ENCODE measurements at regions of chr2 and their contacts with region 1.

Region 1: DNA sequence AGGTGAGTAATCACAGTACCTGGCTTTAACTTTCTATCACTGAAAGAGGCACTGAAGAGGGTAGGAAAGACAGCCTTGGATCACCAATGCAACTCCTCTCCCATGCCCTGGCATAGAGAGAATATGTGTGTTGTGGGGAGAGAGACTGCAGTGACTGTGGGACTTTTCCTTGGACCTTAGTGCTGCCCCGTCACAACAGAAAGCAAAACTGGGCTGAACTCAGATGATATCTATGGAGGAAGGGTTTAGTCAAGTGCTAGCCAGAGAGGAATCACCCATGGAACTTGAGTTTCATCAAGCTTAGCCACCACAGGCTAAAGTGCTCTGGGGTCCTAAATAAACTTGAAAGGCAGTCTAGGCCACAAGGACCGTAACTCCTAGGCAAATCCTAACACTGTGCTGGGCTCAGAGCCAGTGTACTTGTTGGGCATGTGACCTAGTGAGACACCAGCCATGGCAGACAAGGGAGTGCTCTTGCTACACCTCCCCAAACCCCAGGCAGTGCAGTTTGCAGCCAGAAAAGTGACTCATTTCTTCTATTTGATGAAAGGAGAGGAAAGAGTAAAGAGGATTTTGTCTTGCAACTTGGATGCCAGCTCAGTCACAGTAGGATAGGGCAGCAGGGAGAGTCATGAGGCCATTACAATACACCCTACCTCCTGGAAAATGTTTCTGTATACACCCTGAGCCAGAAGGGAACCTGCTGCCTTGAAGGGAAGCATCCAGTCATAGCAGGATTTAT is 105.8 kb upstream of the SPOPL start:
- DNase-seq: no peak
- CTCF ChIP-seq: no peak

Region 2: GRCh38 chr2:137947728-137948336 is 447.9 kb before region 1 on chr2:
- in situ Hi-C with region 1: loop called (anchors 25 kb)
- DNase-seq: peak; percentile 10
- CTCF ChIP-seq: peak; percentile 35